Activated CD4-positive, alpha-beta T cell treated with anti-CD3 and anti-CD28 coated beads for 36 hours (primary cell): ENCODE measurements at regions of chr11 and their contacts with region 1.

Region 1: DNA sequence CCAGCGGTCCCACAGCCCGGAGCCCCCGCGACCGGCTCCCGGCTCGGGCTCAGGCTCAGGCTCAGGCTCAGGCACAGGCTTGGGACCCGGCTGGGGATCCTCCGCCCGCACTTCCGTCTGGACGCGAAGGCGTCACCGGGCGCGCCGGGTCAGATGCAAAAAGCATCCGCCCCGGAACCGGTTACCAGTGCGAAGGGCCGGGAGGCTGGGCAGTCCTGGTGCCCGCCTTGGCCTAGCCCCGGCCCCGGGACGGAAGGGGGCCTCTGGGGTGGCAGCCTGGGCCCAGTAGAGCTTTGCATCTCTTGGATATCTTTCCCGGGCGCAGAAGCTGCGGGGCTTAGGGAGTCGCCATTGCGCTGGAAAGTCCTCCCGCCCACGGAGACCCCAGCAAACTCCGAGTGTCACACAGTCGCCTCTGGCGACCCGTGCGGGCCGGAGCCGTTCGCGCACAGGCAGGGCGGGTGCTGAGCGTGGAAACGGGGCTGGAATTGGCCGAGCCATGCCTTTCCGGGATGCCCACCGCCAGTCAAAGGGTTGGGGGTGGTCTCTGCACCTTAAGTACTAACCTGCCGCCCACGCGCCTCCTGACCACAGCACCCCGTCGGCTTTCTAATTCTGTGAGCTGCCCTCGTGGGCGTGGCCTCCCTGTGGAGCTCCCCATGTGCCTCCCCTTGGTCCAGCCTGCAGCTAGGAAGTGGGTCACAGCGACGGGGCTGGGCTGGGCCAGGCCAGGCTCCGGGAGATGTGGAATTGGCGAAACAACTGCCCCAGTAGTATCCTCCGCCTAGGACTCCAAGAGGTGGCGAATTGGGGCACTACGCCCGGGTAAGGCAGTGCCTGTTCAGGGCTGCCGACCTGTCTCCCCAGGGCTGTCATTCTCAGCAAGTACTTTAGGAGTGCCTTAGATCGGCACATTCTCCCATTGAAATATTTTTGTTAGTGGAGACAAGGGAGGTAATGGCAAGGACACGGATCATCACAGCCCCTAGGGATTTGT is at the start of gene TMEM9B:
- DNase-seq: peak; percentile 90
- ATAC-seq: peak; percentile 87
- H3K4me3 Mint-ChIP-seq: peak within 1 kb of the TSS; percentile 81
- H3K27ac Mint-ChIP-seq: peak within 1 kb of the TSS; percentile 89
- H3K4me1 Mint-ChIP-seq: peaks cover 29% of the 10 kb centered on the region
- H3K27me3 Mint-ChIP-seq: no peaks in the 10 kb centered on the region
- total RNA-seq, gene TMEM9B: 9.9 to 13.1 TPM

Region 2: DNA sequence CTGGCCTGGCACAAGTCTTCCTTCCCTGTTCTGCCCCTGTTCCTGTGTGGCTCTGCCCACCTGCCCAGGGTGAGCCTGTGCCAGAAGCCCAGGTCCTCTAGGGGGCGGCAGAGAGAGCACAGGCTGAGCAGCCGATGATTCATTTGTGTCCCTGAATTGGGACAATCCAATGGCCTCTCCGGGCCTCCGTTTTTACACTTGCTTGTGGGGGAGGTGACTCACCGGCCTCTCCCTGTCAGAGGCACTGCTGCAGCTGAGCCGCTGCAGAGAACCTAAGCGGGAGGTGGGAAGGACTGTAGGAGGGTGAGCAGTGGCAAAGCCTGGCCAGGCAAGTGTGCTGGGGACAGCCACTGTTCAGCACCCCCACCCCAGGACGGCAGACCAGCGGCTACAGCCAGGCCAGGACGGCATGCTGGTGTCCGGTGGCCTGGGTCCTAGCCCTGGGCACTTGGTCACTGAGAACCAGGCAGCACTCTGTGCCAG is 635.7 kb before region 1 on chr11:
- CTCF ChIA-PET with region 1: no interaction called
- POLR2A ChIA-PET with region 1: no interaction called
- intact Hi-C with region 1: loop called in 1 of 2 experiments (anchors 2 kb)
- DNase-seq: peak; percentile 92
- ATAC-seq: peak; percentile 99
- H3K4me3 Mint-ChIP-seq: no peak overlapping the region
- H3K27ac Mint-ChIP-seq: no peak overlapping the region
- H3K4me1 Mint-ChIP-seq: peaks cover 3% of the 10 kb centered on the region
- H3K27me3 Mint-ChIP-seq: peaks cover 8% of the 10 kb centered on the region

Region 3: DNA sequence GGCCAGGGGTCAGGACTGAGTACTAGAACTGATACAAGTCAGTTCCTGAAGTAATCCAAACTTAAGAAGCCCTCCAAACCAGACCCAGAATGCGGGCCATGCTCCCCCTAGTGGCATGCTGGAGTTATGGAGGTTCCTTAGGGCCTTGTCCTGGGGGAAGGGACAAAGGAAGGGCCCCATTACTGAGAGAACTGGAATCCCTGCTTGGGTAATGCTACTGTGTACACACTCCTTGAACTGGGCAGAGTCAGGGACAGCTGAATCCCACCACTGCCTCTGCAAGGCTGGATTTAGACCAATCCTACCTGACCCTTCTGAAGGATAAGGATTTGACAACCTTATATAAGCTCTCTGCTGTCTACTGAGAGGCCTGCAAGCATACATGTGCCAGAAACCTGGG is 151.0 kb before region 1 on chr11:
- CTCF ChIA-PET with region 1: interaction called, 4 read pairs
- POLR2A ChIA-PET with region 1: no interaction called
- intact Hi-C with region 1: loop called in 1 of 2 experiments (anchors 5 kb)
- DNase-seq: peak; percentile 73
- ATAC-seq: peak; percentile 91
- H3K4me3 Mint-ChIP-seq: no peak overlapping the region
- H3K27ac Mint-ChIP-seq: no peak overlapping the region
- H3K4me1 Mint-ChIP-seq: peaks cover 4% of the 10 kb centered on the region
- H3K27me3 Mint-ChIP-seq: peaks cover 9% of the 10 kb centered on the region

Region 4: DNA sequence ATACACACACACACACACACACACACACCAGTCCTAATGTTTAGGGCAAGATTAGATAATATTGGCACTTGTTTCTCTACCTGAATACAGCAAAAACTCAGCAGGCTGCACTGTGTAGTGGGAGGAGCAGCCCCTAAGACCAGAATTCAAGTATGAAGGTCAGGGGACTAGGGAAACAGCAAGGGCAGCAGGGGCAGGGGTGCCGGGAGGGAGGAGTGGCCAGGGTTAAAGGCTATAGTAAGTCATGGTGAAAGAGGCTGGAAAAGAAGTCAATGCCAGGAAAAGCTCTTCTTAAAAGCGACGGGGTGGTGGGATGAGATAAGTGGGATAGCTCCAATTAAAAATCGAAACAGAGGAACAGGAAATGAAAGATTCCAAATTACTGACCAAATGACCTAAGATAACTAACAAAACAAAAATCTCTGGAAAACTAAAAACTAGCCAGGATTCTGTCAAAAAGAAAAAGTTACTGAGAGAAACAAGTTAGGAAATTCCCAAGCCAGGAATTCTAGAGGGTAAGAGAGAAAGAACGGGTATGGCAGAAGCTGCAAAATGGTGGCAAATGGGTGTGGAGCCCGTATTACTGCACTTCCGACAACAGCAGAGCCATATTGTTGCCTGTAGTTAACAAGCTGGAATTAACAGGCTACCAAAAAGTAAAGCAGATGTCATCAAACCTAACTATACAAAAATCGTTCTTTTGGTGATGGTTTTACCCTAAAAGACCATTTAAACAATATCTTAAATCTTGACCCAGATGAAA is 23.1 kb before region 1 on chr11:
- CTCF ChIA-PET with region 1: interaction called, 22 read pairs
- POLR2A ChIA-PET with region 1: no interaction called
- intact Hi-C with region 1: no loop called
- DNase-seq: no peak
- ATAC-seq: no peak
- H3K4me3 Mint-ChIP-seq: no peak overlapping the region
- H3K27ac Mint-ChIP-seq: no peak overlapping the region
- H3K4me1 Mint-ChIP-seq: no peaks in the 10 kb centered on the region
- H3K27me3 Mint-ChIP-seq: no peaks in the 10 kb centered on the region

Region 5: GRCh38 chr11:9142732-9143131 is 178.1 kb after region 1 on chr11:
- CTCF ChIA-PET with region 1: interaction called, 25 read pairs
- POLR2A ChIA-PET with region 1: no interaction called
- intact Hi-C with region 1: loop called in 1 of 2 experiments (anchors 1 kb)
- DNase-seq: no peak
- ATAC-seq: no peak
- H3K4me3 Mint-ChIP-seq: no peak overlapping the region
- H3K27ac Mint-ChIP-seq: no peak overlapping the region
- H3K4me1 Mint-ChIP-seq: peaks cover 28% of the 10 kb centered on the region
- H3K27me3 Mint-ChIP-seq: no peaks in the 10 kb centered on the region

Region 6: GRCh38 chr11:9506489-9507276 is 542.1 kb after region 1 on chr11:
- CTCF ChIA-PET with region 1: interaction called, 5 read pairs
- POLR2A ChIA-PET with region 1: no interaction called
- intact Hi-C with region 1: loop called in 1 of 2 experiments (anchors 5 kb)
- DNase-seq: peak; percentile 88
- ATAC-seq: peak; percentile 88
- H3K4me3 Mint-ChIP-seq: no peak overlapping the region
- H3K27ac Mint-ChIP-seq: no peak overlapping the region
- H3K4me1 Mint-ChIP-seq: peaks cover 4% of the 10 kb centered on the region
- H3K27me3 Mint-ChIP-seq: no peaks in the 10 kb centered on the region